ENCODE measurements at regions of chr4 and their contacts with region 1.

Region 1: DNA sequence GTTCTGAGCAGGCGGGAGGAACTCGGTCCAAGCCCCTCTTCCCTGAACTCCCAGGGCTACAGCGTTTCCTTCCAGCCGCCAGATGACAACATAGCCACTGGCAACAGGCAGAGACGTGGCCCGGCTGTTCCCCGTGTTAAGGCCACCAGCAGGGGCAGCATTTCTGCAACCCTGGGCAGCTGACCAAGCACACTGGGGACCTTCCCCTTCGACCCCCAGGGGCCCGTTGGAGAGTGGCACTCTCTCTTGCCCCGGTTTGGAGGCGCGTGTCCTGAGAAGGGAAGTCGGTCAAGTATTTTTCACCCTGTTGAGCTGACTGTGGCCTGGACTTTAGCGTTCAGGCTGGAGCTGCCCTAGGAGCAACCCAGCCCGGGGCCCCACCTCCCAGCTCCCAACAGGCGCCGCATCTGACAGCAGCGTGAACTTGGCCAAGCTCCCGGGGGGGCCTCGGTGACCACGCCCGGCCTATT is 37.6 kb downstream of the ZBTB49 start:
- DNase-seq: peak in 1 of 2 donors; percentile 20
- H3K4me3 ChIP-seq: no peak overlapping the region
- H3K27ac ChIP-seq: no peak overlapping the region
- H3K4me1 ChIP-seq: no peaks in the 10 kb centered on the region
- H3K27me3 ChIP-seq: no peaks in the 10 kb centered on the region
- CTCF ChIP-seq: no peak
- POLR2A ChIP-seq: no peak

Region 2: DNA sequence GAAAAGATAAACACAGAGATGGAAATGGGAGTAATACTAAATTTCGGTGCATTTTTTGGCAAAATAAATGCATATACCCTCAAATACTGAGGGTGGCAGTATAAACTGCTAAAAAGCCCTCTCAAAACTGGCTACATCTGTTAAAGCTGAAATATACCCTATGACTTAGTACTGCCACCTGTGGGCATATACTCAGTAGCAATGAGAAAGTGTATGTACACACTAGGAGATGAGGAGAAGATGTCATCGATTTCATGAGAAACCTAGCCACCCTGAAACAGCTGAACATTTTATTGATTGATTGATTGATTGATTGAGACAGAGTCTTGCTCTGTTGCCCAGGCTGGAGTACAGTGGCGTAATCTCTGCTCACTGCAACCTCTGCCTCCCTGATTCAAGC is 67.4 kb before region 1 on chr4:
- intact Hi-C with region 1: no loop called
- DNase-seq: no peak
- H3K4me3 ChIP-seq: no peak overlapping the region
- H3K27ac ChIP-seq: no peak overlapping the region
- H3K4me1 ChIP-seq: no peaks in the 10 kb centered on the region
- H3K27me3 ChIP-seq: no peaks in the 10 kb centered on the region
- CTCF ChIP-seq: no peak
- POLR2A ChIP-seq: no peak

Region 3: DNA sequence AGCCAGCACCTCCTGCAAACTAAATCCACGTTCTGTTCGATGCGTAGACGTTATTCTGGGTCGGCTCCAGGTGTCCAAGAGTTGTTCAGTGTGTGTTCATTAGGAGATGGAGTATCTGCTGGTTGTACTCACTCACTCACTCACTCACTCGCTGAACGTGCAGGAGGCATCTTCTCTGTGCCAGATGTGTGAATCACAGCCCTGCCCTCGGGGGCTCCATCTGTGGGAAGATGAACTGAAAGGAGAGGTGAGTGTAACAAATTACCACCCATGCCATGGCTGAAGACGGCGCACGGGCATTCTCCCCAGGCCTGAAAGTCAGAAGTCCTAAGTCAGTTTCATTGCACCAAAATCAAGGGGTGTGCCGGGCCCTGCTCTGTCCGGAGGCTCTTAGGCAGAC is 75.3 kb after region 1 on chr4:
- intact Hi-C with region 1: loop called (anchors 2 kb)
- DNase-seq: no peak
- H3K4me3 ChIP-seq: no peak overlapping the region
- H3K27ac ChIP-seq: no peak overlapping the region
- H3K4me1 ChIP-seq: no peaks in the 10 kb centered on the region
- H3K27me3 ChIP-seq: peaks cover 0 to 19% of the 10 kb centered on the region in 2 donors
- CTCF ChIP-seq: no peak
- POLR2A ChIP-seq: no peak

Region 4: GRCh38 chr4:5970776-5971431 is 1643.2 kb after region 1 on chr4:
- intact Hi-C with region 1: loop called (anchors 5 kb)
- DNase-seq: peak in 1 of 2 donors; percentile 45
- H3K4me3 ChIP-seq: no peak overlapping the region
- H3K27ac ChIP-seq: no peak overlapping the region
- H3K4me1 ChIP-seq: no peaks in the 10 kb centered on the region
- H3K27me3 ChIP-seq: peaks cover 0 to 47% of the 10 kb centered on the region in 2 donors
- CTCF ChIP-seq: no peak
- POLR2A ChIP-seq: no peak

Measured in breast epithelium (tissue), 4 donors.